ENCODE measurements at regions of chr6 and their contacts with region 1.

Region 1: GRCh38 chr6:134123666-134124208 is 71.3 kb upstream of the SLC2A12 start:
- H3K4me3 ChIP-seq: no peak overlapping the region
- H3K27ac ChIP-seq: no peak overlapping the region
- H3K4me1 ChIP-seq: no peaks in the 10 kb centered on the region
- CTCF ChIP-seq: peak; percentile 17

Region 2: GRCh38 chr6:133966654-133967329 is 156.9 kb before region 1 on chr6:
- CTCF ChIA-PET with region 1: no interaction called
- POLR2A ChIA-PET with region 1: no interaction called
- H3K4me3 ChIP-seq: no peak overlapping the region
- H3K27ac ChIP-seq: no peak overlapping the region
- H3K4me1 ChIP-seq: peaks cover 12% of the 10 kb centered on the region
- CTCF ChIP-seq: no peak

Region 3: GRCh38 chr6:134111062-134111677 is 12.6 kb before region 1 on chr6:
- CTCF ChIA-PET with region 1: interaction called, 149 read pairs
- POLR2A ChIA-PET with region 1: no interaction called
- H3K4me3 ChIP-seq: no peak overlapping the region
- H3K27ac ChIP-seq: no peak overlapping the region
- H3K4me1 ChIP-seq: peaks cover 7% of the 10 kb centered on the region
- CTCF ChIP-seq: peak; percentile 77

Region 4: DNA sequence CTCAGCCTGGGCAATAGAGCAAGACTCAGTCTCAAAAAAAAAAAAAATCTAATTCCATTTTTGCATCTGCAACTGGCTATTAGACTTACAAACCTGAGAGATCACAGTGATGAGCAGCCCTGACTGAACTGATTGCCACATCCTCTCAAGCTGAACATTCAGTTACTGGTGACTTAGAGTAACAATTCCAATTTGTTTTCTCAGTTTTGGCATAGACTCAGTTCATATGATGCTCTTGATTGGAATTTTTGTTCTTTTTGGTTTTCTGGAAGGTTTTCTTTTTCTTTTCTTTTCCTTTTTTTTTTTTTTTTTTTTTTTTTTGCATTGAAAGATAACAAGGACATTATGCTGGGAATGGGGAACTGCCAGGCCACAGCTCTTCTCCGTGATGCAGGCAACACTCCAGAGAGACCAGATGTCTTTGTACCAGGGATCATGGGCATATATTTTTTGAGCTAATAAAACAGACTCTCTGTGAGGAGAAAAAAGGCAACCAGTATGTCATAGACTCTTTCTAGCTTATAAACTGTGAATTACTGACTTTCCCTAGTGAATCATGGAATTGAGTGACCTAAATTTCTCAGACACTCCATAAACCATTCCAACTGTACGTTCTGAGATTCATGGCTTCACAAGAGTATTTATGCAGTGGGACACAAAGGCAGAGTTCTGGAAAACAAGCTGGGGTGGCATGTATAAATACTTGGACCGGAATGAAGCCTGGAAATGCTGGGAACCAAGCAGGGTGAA is 14.7 kb after region 1 on chr6:
- CTCF ChIA-PET with region 1: interaction called, 78 read pairs
- POLR2A ChIA-PET with region 1: no interaction called
- H3K4me3 ChIP-seq: no peak overlapping the region
- H3K27ac ChIP-seq: no peak overlapping the region
- H3K4me1 ChIP-seq: no peaks in the 10 kb centered on the region
- CTCF ChIP-seq: no peak

Region 5: DNA sequence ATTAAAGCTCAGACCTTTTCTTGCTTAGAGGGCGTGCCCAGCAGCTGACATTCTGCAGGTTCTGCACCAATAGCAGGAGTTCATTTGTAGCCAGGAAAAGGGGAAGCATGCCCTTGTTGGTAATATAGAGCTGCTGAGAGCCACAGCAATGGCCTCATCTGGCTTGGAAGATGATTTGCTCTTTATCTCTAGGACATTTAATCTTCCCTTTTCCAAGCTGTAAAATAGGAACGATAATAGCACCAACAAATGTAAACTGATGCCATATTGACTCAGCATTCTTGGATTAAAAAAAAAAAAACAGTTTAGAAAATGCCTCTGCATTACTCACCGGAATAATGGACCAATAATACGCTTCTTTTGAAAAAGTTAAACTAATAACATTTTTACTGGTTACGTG is 22.0 kb after region 1 on chr6:
- CTCF ChIA-PET with region 1: interaction called, 32 read pairs
- POLR2A ChIA-PET with region 1: no interaction called
- H3K4me3 ChIP-seq: no peak overlapping the region
- H3K27ac ChIP-seq: no peak overlapping the region
- H3K4me1 ChIP-seq: no peaks in the 10 kb centered on the region
- CTCF ChIP-seq: no peak

Region 6: DNA sequence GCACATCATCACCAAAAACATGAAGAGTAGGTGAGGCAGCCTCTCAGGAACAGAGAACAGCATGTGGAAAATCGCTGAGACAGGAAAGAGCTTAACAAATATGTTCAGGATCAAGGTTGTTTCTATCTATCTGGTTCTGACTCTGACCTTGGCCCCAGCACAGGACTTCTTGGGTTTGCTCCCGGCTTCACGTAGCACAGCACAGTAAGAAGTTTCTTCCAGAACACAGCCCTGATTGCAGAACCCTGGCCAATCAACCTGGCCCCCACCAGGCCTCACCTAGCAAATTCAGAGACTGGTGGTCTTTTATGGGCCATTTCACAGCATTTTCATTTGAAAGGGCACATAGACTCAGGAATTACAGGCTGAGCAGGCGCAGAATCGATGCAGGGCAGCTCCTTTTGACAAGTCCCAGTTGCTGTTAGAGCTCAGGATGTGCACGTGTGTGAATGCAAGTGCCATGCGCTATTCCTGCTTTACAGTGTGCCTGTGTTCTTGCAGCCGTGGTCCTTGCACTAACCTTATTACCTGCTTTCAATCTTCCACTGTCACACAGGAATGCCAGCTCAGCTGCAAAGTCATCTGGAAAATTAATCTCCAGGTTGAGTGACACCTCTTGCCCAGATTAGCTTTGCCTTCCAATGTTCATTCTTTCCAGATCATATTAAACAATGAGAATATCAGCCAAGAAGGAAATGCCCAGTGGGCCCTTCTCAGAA is 29.2 kb after region 1 on chr6:
- CTCF ChIA-PET with region 1: interaction called, 41 read pairs
- POLR2A ChIA-PET with region 1: no interaction called
- H3K4me3 ChIP-seq: no peak overlapping the region
- H3K27ac ChIP-seq: no peak overlapping the region
- H3K4me1 ChIP-seq: no peaks in the 10 kb centered on the region
- CTCF ChIP-seq: no peak

Region 7: GRCh38 chr6:134161036-134161435 is 37.3 kb after region 1 on chr6:
- CTCF ChIA-PET with region 1: interaction called, 41 read pairs
- POLR2A ChIA-PET with region 1: no interaction called
- H3K4me3 ChIP-seq: no peak overlapping the region
- H3K27ac ChIP-seq: no peak overlapping the region
- H3K4me1 ChIP-seq: no peaks in the 10 kb centered on the region
- CTCF ChIP-seq: no peak

Region 8: GRCh38 chr6:134223796-134224420 is 100.2 kb after region 1 on chr6:
- CTCF ChIA-PET with region 1: no interaction called
- POLR2A ChIA-PET with region 1: no interaction called
- H3K4me3 ChIP-seq: no peak overlapping the region
- H3K27ac ChIP-seq: no peak overlapping the region
- H3K4me1 ChIP-seq: no peaks in the 10 kb centered on the region
- CTCF ChIP-seq: no peak

Measured in HEK293 (cell line).